Psoas muscle (tissue), 8 donors: ENCODE measurements at regions of chr16 and their contacts with region 1.

Region 1: GRCh38 chr16:24568392-24568791 is 29.0 kb downstream of the RBBP6 start:
- DNase-seq: no peak
- ATAC-seq: no peak
- H3K4me3 ChIP-seq: no peak overlapping the region
- H3K27ac ChIP-seq: no peak overlapping the region
- H3K4me1 ChIP-seq: no peaks in the 10 kb centered on the region
- H3K27me3 ChIP-seq: no peaks in the 10 kb centered on the region
- CTCF ChIP-seq: peak; percentile 13

Region 2: GRCh38 chr16:24800586-24800985 is 232.2 kb after region 1 on chr16:
- intact Hi-C with region 1: loop called in 1 of 2 experiments (anchors 5 kb)
- DNase-seq: no peak
- ATAC-seq: peak in 3 of 4 donors; percentile 35 to 54 (median 49)
- H3K4me3 ChIP-seq: no peak overlapping the region
- H3K27ac ChIP-seq: no peak overlapping the region
- H3K4me1 ChIP-seq: no peaks in the 10 kb centered on the region
- H3K27me3 ChIP-seq: no peaks in the 10 kb centered on the region
- CTCF ChIP-seq: no peak

Region 3: GRCh38 chr16:24943473-24943872 is 375.1 kb after region 1 on chr16:
- intact Hi-C with region 1: loop called in 1 of 2 experiments (anchors 5 kb)
- DNase-seq: no peak
- ATAC-seq: no peak
- H3K4me3 ChIP-seq: no peak overlapping the region
- H3K27ac ChIP-seq: no peak overlapping the region
- H3K4me1 ChIP-seq: no peaks in the 10 kb centered on the region
- H3K27me3 ChIP-seq: no peaks in the 10 kb centered on the region
- CTCF ChIP-seq: no peak